ENCODE measurements at regions of chr16 and their contacts with region 1.

Region 1: GRCh38 chr16:6247775-6248174 is 1084.9 kb upstream of the RBFOX1 start:
- DNase-seq: no peak
- ATAC-seq: no peak
- H3K4me3 ChIP-seq: no peak overlapping the region
- H3K27ac ChIP-seq: no peak overlapping the region
- H3K4me1 ChIP-seq: no peaks in the 10 kb centered on the region
- H3K27me3 ChIP-seq: no peaks in the 10 kb centered on the region
- CTCF ChIP-seq: no peak
- POLR2A ChIP-seq: no peak

Region 2: DNA sequence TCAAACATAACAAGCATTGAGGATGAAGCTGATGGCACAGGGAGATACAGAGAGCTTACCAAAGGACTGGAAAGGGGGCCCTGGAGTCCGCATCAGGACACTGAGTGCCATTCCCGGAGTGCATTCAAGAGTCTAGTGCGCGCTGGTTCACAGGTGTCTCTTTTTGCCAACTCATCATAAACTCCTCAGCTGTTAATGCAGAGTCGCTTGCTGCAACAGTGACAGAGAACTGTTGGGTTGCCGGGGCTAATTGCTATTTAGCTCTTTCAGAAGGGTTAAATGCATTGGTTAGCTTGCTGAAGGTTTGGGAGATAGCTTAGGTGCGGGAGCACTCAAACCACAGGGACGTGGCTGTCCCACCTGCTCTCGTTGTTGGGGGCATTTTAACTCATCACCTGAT is 58.6 kb before region 1 on chr16:
- in situ Hi-C with region 1: loop called in 1 of 4 experiments (anchors 10 kb)
- intact Hi-C with region 1: no loop called
- DNase-seq: no peak
- ATAC-seq: no peak
- H3K4me3 ChIP-seq: no peak overlapping the region
- H3K27ac ChIP-seq: no peak overlapping the region
- H3K4me1 ChIP-seq: no peaks in the 10 kb centered on the region
- H3K27me3 ChIP-seq: no peaks in the 10 kb centered on the region
- CTCF ChIP-seq: no peak
- POLR2A ChIP-seq: no peak

Region 3: DNA sequence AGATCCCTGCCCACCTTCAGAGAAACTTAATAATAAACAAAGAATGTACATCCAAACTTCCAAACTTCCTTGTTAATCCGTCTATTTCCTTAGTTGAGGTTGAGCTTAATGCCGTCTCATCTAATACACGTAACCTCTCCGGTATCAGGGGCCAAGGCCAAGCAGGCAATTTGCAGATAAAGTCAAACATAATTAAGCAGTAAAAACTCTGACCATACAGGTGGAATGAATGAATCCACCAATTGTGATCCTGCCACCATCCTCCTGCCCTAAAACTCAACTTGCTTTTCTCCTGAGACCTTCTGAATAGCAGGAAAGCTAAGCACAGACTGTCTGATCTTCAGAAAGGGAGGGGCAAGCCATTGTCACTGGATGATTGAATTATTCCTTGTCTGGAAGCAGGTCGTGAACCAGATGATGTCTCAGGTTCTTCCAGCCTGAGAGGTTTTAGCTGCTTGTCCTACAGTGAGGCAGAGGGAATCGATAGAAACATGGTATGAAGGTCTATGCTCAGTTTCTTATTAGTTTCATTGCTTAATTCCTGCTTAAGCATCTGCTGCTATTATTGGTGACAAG is 38.3 kb before region 1 on chr16:
- in situ Hi-C with region 1: no loop called
- intact Hi-C with region 1: no loop called
- DNase-seq: no peak
- ATAC-seq: no peak
- H3K4me3 ChIP-seq: no peak overlapping the region
- H3K27ac ChIP-seq: no peak overlapping the region
- H3K4me1 ChIP-seq: no peaks in the 10 kb centered on the region
- H3K27me3 ChIP-seq: no peaks in the 10 kb centered on the region
- CTCF ChIP-seq: no peak
- POLR2A ChIP-seq: no peak

Region 4: GRCh38 chr16:6493555-6493954 is 245.8 kb after region 1 on chr16:
- in situ Hi-C with region 1: no loop called
- intact Hi-C with region 1: no loop called
- DNase-seq: no peak
- ATAC-seq: no peak
- H3K4me3 ChIP-seq: no peak overlapping the region
- H3K27ac ChIP-seq: no peak overlapping the region
- H3K4me1 ChIP-seq: no peaks in the 10 kb centered on the region
- H3K27me3 ChIP-seq: no peaks in the 10 kb centered on the region
- CTCF ChIP-seq: no peak
- POLR2A ChIP-seq: no peak